OCI-LY7 (cell line): ENCODE measurements at regions of chr13 and their contacts with region 1.

Region 1: GRCh38 chr13:90943946-90944345 is 403.5 kb upstream of the MIR17HG start:
- DNase-seq: no peak
- H3K4me3 ChIP-seq: no peak overlapping the region
- H3K27ac ChIP-seq: no peak overlapping the region
- H3K4me1 ChIP-seq: no peaks in the 10 kb centered on the region
- CTCF ChIP-seq: no peak

Region 2: DNA sequence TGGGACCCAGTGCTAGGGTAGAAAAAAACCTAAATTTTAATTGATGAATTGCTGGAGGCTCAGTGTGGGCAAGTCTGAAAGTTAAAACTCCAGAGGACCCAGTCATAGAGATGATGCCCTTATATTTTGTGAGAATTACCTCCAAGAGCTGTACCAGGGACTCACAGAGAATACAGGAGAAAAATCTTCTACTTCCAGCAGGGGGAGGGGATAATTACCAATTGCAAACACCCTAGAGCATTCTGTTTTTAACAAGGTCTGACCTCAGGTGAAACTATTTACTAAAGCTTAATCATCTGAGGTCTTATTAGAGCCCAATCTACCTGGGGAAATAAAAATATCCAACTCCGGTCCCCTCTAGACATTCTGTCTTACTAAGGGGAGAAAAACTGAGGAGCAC is 591.2 kb before region 1 on chr13:
- CTCF ChIA-PET with region 1: no interaction called
- POLR2A ChIA-PET with region 1: no interaction called
- intact Hi-C with region 1: no loop called
- DNase-seq: no peak
- H3K4me3 ChIP-seq: no peak overlapping the region
- H3K27ac ChIP-seq: no peak overlapping the region
- H3K4me1 ChIP-seq: no peaks in the 10 kb centered on the region
- CTCF ChIP-seq: no peak

Region 3: GRCh38 chr13:90928109-90928508 is 15.8 kb before region 1 on chr13:
- CTCF ChIA-PET with region 1: no interaction called
- POLR2A ChIA-PET with region 1: no interaction called
- intact Hi-C with region 1: no loop called
- DNase-seq: no peak
- H3K4me3 ChIP-seq: no peak overlapping the region
- H3K27ac ChIP-seq: no peak overlapping the region
- H3K4me1 ChIP-seq: no peaks in the 10 kb centered on the region
- CTCF ChIP-seq: no peak

Region 4: DNA sequence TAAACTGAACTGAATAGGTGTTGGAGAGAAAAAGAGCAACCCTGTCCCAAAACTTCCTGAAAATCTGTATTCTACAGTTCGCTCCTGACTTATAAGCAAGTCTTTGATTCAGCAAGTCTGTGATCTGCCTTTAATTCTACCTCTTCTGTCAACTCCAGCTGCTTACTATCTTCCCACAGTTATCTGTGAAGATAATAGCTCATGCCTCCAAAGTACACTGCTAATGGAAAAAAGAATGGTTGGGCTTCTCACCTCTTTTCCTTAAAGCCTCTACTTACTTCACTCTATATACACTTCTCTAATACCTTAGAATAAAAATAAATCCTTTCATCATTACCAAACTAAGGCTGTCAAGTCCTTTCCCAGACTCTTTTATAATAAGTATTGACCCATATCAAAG is 12.1 kb after region 1 on chr13:
- CTCF ChIA-PET with region 1: no interaction called
- POLR2A ChIA-PET with region 1: interaction called, 10 read pairs
- intact Hi-C with region 1: no loop called
- DNase-seq: no peak
- H3K4me3 ChIP-seq: no peak overlapping the region
- H3K27ac ChIP-seq: no peak overlapping the region
- H3K4me1 ChIP-seq: no peaks in the 10 kb centered on the region
- CTCF ChIP-seq: no peak